Gastrocnemius medialis (tissue), 4 donors: ENCODE measurements at regions of chr3 and their contacts with region 1.

Region 1: GRCh38 chr3:45224824-45225464 is 1.1 kb downstream of the TMEM158 start:
- DNase-seq: peak; percentile 59 to 69
- ATAC-seq: peak; percentile 79 to 83
- H3K4me3 ChIP-seq: peak overlapping the region; percentile 36 to 60 (median 49)
- H3K27ac ChIP-seq: no peak overlapping the region
- H3K4me1 ChIP-seq: peaks cover 3 to 11% of the 10 kb centered on the region in 2 donors
- H3K27me3 ChIP-seq: peaks cover 0 to 4% (median 0%) of the 10 kb centered on the region in 3 donors
- CTCF ChIP-seq: peak; percentile 40 to 70 (median 51)
- POLR2A ChIP-seq: no peak

Region 2: GRCh38 chr3:45387636-45388348 is 162.8 kb after region 1 on chr3:
- in situ Hi-C with region 1: no loop called
- intact Hi-C with region 1: loop called (anchors 1 kb)
- DNase-seq: no peak
- ATAC-seq: no peak
- H3K4me3 ChIP-seq: peak overlapping the region; percentile 70 to 98 (median 81)
- H3K27ac ChIP-seq: peak overlapping the region; percentile 64 to 87 (median 82)
- H3K4me1 ChIP-seq: peaks cover 8 to 10% of the 10 kb centered on the region in 2 donors
- H3K27me3 ChIP-seq: no peaks in the 10 kb centered on the region
- CTCF ChIP-seq: no peak
- POLR2A ChIP-seq: no peak

Region 3: GRCh38 chr3:45516829-45517228 is 291.9 kb after region 1 on chr3:
- in situ Hi-C with region 1: no loop called
- intact Hi-C with region 1: no loop called
- DNase-seq: peak in 1 of 2 donors; percentile 9
- ATAC-seq: peak; percentile 85 to 98
- H3K4me3 ChIP-seq: no peak overlapping the region
- H3K27ac ChIP-seq: peak overlapping the region; percentile 66 to 84 (median 74)
- H3K4me1 ChIP-seq: peaks cover 14% of the 10 kb centered on the region in 2 donors
- H3K27me3 ChIP-seq: no peaks in the 10 kb centered on the region
- CTCF ChIP-seq: no peak
- POLR2A ChIP-seq: no peak